ENCODE measurements at regions of chr11 and their contacts with region 1.

Region 1: GRCh38 chr11:39586036-39586435 is 1873.4 kb downstream of the LRRC4C start:
- DNase-seq: no peak
- H3K4me3 ChIP-seq: no peak overlapping the region
- H3K4me3 Mint-ChIP-seq: no peak overlapping the region
- H3K27ac ChIP-seq: no peak overlapping the region
- H3K27ac Mint-ChIP-seq: no peak overlapping the region
- H3K4me1 ChIP-seq: no peaks in the 10 kb centered on the region
- H3K4me1 Mint-ChIP-seq: no peaks in the 10 kb centered on the region
- H3K27me3 ChIP-seq: no peaks in the 10 kb centered on the region
- H3K27me3 Mint-ChIP-seq: no peaks in the 10 kb centered on the region
- CTCF ChIP-seq: no peak

Region 2: DNA sequence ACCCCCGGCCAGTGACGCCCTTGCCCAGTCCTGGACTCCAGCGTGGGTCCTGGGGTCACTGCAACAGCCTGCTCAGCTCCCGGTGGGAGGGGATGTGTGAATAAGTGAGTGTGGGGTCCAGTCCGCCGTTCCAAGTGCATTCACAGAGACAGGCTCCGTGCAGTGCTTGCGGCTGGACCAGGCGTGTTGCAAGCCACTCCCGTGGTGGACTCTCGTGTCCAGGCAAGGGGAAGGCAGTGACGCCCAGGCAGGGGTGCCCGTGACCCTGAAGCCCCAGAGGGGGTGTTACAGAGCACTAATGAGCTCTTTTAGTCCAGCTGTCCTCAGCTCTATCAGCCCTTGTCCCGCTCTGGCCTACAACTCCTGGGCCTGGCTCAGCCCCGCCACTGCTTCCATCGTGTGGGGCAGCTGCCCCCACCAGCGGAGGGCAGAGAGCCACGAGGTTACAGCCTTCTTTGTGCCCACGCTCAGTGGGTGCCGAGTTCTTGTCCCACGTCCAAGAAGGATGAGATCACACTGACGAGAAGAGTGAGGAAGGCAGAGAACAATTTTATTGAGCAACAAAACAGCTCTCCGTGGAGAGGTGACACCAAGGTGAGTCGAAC is 65.9 kb after region 1 on chr11:
- intact Hi-C with region 1: no loop called
- DNase-seq: no peak
- H3K4me3 ChIP-seq: no peak overlapping the region
- H3K4me3 Mint-ChIP-seq: no peak overlapping the region
- H3K27ac ChIP-seq: no peak overlapping the region
- H3K27ac Mint-ChIP-seq: no peak overlapping the region
- H3K4me1 ChIP-seq: no peaks in the 10 kb centered on the region
- H3K4me1 Mint-ChIP-seq: no peaks in the 10 kb centered on the region
- H3K27me3 ChIP-seq: no peaks in the 10 kb centered on the region
- H3K27me3 Mint-ChIP-seq: peaks cover 0 to 2% (median 0%) of the 10 kb centered on the region in 3 donors
- CTCF ChIP-seq: no peak

Region 3: DNA sequence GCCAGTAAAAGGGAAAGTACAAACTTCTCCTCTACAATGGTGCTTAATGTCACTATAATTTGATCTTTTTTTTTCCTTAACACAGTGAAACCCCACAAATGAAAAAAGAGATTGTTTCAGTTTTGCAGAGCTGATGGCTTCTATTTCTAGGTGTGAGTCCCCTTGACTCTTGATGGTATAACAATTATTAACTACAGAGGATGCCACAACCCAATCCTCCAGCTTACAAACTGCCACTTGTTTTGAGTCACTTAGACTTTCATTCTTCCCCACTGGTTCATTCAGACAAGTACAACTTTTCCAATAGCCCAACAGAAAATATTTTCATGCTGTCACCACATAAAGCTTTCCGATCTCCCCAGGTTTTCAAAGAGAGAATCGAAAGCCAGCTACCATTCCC is 1061.3 kb after region 1 on chr11:
- intact Hi-C with region 1: loop called in 1 of 2 experiments (anchors 10 kb)
- DNase-seq: no peak
- H3K4me3 ChIP-seq: no peak overlapping the region
- H3K4me3 Mint-ChIP-seq: no peak overlapping the region
- H3K27ac ChIP-seq: no peak overlapping the region
- H3K27ac Mint-ChIP-seq: no peak overlapping the region
- H3K4me1 ChIP-seq: no peaks in the 10 kb centered on the region
- H3K4me1 Mint-ChIP-seq: no peaks in the 10 kb centered on the region
- H3K27me3 ChIP-seq: no peaks in the 10 kb centered on the region
- H3K27me3 Mint-ChIP-seq: peaks cover 0 to 2% (median 0%) of the 10 kb centered on the region in 3 donors
- CTCF ChIP-seq: no peak

Measured in CD14-positive monocyte (primary cell).